GM10248 (cell line): ENCODE measurements at regions of chr6 and their contacts with region 1.

Region 1: DNA sequence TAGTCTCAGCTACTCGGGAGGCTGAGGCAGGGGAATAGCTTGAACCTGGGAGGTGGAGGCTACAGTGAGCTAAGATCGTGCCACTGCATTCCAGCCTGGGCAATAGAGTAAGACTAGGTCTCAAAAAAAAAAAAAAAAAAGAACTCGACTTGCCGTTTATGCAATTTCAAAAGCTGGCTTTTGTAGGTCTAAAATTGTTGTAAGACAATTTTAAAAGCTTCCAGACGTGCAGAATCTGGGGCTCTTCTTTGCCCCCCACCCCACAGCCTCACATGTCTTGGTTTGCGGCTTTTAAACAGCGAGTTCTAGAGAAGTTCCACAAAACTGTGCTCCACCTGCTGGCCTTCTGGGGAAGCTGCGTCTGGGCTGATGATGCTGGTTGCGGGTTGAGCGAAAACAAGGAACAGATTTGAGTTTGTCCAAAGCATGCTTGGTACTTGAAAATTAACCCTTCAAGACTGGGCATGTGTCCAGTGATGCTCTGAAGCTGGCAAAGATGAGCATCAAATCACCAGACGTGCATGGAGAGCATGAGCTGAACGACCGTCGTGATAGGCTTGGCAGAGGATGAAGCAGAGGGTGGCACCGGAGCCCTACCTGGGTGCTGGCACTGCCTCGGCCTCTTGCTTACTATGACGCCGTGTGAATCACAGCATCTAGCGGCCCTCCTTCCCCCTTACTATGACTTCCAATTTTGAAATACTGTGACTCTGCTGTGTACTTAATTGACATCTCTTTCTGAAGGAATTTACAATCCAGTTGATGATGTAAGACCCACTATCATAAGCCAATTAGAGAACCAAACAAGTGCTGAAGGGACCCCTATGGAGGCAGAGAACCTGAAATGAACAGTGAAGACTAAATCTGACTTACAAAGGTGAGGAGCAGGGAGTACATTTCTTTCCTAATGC is 171.4 kb downstream of the GMPR start:
- DNase-seq: peak; percentile 56
- CTCF ChIP-seq: peak; percentile 82

Region 2: GRCh38 chr6:16277101-16277981 is 132.4 kb before region 1 on chr6:
- CTCF ChIA-PET with region 1: no interaction called
- POLR2A ChIA-PET with region 1: no interaction called
- DNase-seq: peak; percentile 50
- CTCF ChIP-seq: peak; percentile 17

Region 3: DNA sequence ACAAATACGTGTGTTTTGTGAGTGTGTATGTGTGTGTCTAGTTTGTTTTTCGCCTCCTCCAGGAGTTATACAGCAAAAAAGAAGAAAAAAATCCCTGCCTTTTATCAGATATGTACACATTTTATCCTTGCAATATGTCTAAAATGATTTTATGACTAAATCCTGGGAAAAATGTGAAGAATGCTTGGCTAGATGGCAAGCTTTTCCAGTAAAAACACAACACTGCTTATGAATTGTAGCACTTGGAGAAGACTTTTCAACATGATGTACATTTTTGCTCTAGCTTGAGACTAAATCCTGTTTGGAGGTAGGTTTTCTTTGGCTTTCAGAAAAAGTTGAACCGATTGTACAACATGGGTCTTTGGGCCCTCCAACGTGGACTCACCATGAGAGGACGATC is 11.2 kb before region 1 on chr6:
- CTCF ChIA-PET with region 1: interaction called, 51 read pairs
- POLR2A ChIA-PET with region 1: no interaction called
- DNase-seq: no peak
- CTCF ChIP-seq: no peak

Region 4: GRCh38 chr6:16420715-16421461 is 11.1 kb after region 1 on chr6:
- CTCF ChIA-PET with region 1: interaction called, 16 read pairs
- POLR2A ChIA-PET with region 1: no interaction called
- DNase-seq: peak; percentile 64
- CTCF ChIP-seq: no peak

Region 5: DNA sequence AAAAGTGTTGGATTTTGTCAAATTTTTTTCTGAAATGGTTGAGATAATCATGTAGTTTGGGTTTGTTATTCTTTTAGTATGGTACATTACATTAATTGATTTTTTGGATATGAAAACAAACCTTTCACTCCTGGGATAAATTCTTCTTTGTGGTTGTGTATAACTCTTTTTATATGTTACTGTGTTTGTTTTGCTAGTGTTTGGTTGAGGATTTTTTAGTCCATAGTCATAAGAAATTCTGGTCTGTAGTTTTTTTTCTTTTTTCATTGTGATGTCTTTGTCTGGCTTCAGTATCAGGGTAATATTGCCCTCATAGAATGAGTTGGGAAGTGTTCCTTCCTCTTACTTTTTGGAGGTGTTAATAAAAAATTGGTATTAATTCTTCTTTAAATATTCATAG is 473.6 kb after region 1 on chr6:
- CTCF ChIA-PET with region 1: no interaction called
- POLR2A ChIA-PET with region 1: no interaction called
- DNase-seq: no peak
- CTCF ChIP-seq: no peak